RWPE1 (cell line): ENCODE measurements at regions of chr9 and their contacts with region 1.

Region 1: GRCh38 chr9:100411472-100412283 is 15.3 kb upstream of the MSANTD3 start:
- DNase-seq: peak; percentile 98
- H3K27ac ChIP-seq: peak overlapping the region; percentile 10; the same call in 1 of the 2 replicates
- CTCF ChIP-seq: no peak

Region 2: DNA sequence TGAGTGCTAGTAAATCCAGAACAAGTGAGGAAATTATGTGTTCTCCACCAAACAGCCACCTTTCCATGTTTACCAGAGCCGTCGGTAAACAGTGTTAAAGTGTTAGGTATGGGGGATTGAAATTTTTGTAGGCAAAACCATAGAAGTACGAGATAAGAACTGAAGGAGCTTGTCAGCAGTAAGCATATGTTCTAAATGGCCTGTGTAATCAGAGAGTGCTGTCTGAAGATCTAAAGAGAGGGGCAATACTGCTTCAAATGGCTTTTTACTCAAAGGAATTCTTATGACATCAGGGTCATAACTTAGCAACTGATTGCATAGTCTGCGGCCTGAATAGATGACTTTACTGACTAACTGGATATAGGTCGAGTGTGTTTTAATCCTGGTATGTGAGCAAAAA is 45.6 kb before region 1 on chr9:
- CTCF ChIA-PET with region 1: no interaction called
- POLR2A ChIA-PET with region 1: interaction called, 15 read pairs
- DNase-seq: no peak
- H3K27ac ChIP-seq: no peak overlapping the region
- CTCF ChIP-seq: no peak

Region 3: DNA sequence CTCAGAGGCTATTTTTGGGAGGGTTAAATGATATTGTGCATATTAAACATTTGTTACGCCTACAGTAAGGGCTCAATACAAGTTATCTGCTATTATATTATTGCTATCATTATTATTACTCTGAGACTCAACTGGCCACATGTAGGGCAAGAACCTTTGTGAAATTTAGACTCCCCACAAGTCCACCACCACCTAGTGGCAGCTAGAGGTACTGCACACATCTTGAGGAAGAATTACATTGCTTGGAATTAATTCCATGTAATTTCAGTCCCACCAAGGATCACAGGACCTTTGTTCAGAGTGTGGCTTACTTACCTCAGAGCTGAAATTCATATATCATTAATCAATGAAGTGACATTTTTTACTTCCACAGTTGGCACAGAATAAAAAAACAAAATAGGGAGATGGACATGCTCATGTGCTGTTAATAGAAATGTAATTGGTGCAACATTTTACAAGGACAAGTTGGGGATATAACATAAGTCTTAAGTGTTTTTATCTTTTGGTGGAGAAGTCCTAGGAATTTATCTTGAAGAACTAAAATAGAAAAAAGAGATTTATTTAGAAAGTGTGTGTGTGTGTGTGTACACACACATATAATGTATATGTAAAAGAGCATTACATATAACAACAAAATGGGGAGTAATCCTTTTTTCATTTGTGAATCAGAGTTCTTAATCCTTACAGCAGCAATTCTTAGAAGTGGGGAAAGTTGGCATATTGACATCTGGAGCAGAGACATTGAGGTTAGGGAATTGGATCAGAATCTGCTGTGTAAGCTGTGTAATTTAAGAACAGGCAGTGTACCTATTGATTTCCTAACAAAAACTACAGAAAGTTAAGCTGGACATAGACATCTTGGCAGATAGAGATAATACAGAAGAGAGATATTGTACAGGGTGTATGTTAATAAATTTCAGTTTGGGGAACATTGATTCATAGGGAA is 26.5 kb after region 1 on chr9:
- CTCF ChIA-PET with region 1: interaction called, 13 read pairs
- POLR2A ChIA-PET with region 1: no interaction called
- DNase-seq: peak; percentile 77
- H3K27ac ChIP-seq: no peak overlapping the region
- CTCF ChIP-seq: peak; percentile 100

Region 4: GRCh38 chr9:100449420-100449819 is 37.7 kb after region 1 on chr9:
- CTCF ChIA-PET with region 1: no interaction called
- POLR2A ChIA-PET with region 1: no interaction called
- DNase-seq: no peak
- H3K27ac ChIP-seq: no peak overlapping the region
- CTCF ChIP-seq: no peak